ENCODE measurements at regions of chr2 and their contacts with region 1.

Region 1: DNA sequence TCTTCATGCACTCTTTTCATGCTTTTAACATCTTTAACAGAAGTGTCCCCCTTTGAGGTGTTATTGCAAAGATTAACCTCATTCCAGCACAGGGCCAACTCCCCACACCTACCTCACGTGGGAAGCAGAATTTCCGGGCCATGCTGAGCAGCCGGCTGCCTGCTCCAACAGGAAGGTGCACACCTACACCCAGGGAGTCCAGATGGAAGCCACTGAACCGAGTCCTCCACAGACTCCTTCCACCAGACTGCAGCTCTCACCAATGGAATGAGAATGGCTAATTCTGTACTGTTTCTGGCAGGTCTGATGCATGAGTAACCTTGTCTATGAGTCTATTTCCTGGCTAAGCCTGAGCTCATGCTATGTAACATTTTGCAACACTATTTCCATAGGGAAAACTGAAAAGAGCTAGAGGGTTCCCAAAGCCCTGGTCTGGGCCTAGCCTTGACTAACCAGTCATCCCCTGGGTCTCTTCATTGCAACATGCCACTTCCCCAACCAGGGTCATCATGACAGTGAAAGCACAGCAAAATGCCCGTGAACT is 11.0 kb downstream of the ERFE start:
- DNase-seq: peak in 1 of 2 donors; percentile 75
- ATAC-seq: peak; percentile 63
- H3K4me3 ChIP-seq: no peak overlapping the region
- H3K27ac ChIP-seq: peak overlapping the region; percentile 78 to 92
- H3K4me1 ChIP-seq: peaks cover 0 to 4% of the 10 kb centered on the region in 2 donors
- H3K27me3 ChIP-seq: no peaks in the 10 kb centered on the region

Region 2: GRCh38 chr2:238203094-238203972 is 33.6 kb after region 1 on chr2 and contains the start of gene ILKAP:
- intact Hi-C with region 1: loop called in 1 of 2 experiments (anchors 1 kb)
- DNase-seq: peak; percentile 93 to 96
- ATAC-seq: peak; percentile 97
- H3K4me3 ChIP-seq: peak within 1 kb of the TSS; percentile 98 to 99
- H3K27ac ChIP-seq: peak within 1 kb of the TSS; percentile 94 to 99
- H3K4me1 ChIP-seq: peaks cover 0 to 5% of the 10 kb centered on the region in 2 donors
- H3K27me3 ChIP-seq: no peaks in the 10 kb centered on the region
- total RNA-seq, gene ILKAP: 48.4 to 50.7 TPM

Region 3: GRCh38 chr2:238225911-238226697 is 56.3 kb after region 1 on chr2:
- intact Hi-C with region 1: loop called in 1 of 2 experiments (anchors 5 kb)
- DNase-seq: peak in 1 of 2 donors; percentile 68
- ATAC-seq: no peak
- H3K4me3 ChIP-seq: no peak overlapping the region
- H3K27ac ChIP-seq: no peak overlapping the region
- H3K4me1 ChIP-seq: no peaks in the 10 kb centered on the region
- H3K27me3 ChIP-seq: no peaks in the 10 kb centered on the region

Region 4: DNA sequence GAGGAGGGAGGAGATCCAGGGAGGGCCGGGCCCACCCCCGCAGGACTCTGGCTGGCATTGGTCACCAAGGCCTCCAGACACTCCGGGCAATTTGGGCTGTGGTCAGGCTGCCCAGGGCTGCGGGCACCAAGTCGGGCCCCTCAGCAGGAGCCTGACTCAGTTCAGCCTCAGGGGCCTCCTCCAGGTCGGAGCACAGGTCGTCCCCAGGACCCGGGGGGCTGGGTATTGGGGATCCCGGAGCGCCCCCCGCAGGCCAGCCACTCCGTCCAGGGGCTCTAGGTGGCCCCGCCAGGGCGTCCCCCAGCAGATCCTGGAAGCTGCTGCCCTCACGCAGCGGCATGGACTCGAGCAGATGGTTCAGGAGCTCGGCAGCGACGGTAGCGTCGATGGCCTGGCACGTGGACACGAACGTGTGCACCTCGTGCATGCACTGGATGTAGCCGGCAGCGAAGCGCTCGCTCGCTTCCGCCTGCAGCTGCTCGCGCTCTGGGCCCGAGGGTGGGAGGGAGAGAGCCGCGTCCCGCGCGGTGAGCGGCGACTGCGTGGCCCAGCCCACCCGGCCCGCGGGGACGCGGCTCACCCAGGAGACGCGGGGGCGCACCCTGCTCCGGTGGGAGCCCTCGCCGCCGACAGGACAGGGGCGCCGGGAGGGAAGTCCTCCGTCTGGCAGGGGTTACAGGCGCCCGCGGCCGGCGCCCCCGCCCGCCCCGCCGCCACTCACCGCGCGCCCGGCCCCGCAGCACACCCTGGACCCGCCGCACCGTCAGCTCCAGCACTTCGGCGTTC is 69.2 kb after region 1 on chr2:
- intact Hi-C with region 1: no loop called
- DNase-seq: peak in 1 of 2 donors; percentile 63
- ATAC-seq: no peak
- H3K4me3 ChIP-seq: peak overlapping the region; percentile 50 to 56
- H3K27ac ChIP-seq: no peak overlapping the region
- H3K4me1 ChIP-seq: no peaks in the 10 kb centered on the region
- H3K27me3 ChIP-seq: no peaks in the 10 kb centered on the region